OCI-LY7 (cell line): ENCODE measurements at regions of chr16 and their contacts with region 1.

Region 1: GRCh38 chr16:72537664-72538063 is 365.7 kb upstream of the PMFBP1 start:
- DNase-seq: no peak
- H3K4me3 ChIP-seq: no peak overlapping the region
- H3K27ac ChIP-seq: no peak overlapping the region
- H3K4me1 ChIP-seq: no peaks in the 10 kb centered on the region
- CTCF ChIP-seq: no peak

Region 2: DNA sequence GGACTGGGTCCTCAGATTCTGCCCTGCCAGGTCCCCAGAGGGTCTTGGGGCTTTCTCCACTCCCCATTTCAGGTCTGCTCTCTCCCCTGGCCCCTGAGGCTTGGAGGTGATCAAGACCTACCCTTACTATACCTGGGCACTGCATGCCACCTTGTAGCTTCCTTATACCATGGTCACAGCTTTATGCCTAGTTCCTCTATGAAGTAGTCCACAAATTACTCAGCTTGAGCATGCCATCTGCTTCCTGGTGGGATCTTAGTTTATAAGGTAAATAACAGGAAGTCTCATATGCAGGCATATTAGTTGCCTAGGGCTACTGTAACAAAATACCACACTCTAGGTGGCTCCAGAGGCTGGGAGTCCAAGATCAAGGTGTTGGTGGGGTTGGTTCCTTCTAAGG is 354.7 kb before region 1 on chr16:
- CTCF ChIA-PET with region 1: interaction called, 15 read pairs
- POLR2A ChIA-PET with region 1: no interaction called
- intact Hi-C with region 1: no loop called
- DNase-seq: no peak
- H3K4me3 ChIP-seq: no peak overlapping the region
- H3K27ac ChIP-seq: no peak overlapping the region
- H3K4me1 ChIP-seq: no peaks in the 10 kb centered on the region
- CTCF ChIP-seq: no peak